ENCODE measurements at regions of chr3 and their contacts with region 1.

Region 1: GRCh38 chr3:72818092-72818773 is 30.0 kb downstream of the SHQ1 start:
- DNase-seq: no peak
- H3K4me3 ChIP-seq: no peak overlapping the region
- H3K27ac ChIP-seq: peak overlapping the region; percentile 55
- H3K27me3 ChIP-seq: no peaks in the 10 kb centered on the region
- CTCF ChIP-seq: peak; percentile 73

Region 2: DNA sequence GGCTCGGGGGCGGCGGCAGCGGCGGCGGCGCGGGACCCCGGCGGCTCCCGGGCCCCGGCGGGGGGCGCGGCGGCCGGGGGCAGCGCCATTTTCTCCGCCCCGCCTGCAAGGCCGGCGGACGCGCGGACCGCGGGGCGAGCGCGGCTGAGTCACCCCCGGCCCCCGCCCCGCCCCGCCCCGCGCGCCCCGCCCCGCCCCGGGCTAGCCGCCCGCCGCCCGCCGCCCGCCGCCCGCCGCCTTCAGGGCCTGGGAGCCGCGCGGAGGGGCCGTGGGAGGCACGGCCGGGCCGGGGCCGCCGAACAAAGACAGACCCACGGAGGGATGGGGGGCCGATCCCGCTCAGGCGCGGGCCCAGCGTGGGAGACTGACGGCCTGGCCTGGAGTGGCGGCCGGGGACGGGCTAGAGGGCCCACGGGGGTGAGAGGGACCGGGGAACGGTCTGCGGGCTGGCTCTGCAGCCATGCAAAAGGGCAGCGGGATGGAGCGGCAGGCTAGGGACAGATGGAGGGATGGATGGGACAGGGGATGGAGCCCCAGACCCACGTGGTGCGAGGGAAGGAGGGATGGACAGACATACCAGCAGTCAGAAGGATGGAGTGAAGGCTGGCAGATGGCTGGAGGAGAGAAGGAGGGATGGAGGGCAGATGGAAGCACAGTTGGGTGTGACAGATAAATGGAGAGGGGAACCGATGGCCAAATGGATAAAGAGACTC is 1092.8 kb before region 1 on chr3 and contains the start of gene EIF4E3:
- CTCF ChIA-PET with region 1: interaction called, 25 read pairs
- POLR2A ChIA-PET with region 1: no interaction called
- DNase-seq: no peak
- H3K4me3 ChIP-seq: peak within 1 kb of the TSS; percentile 72
- H3K27ac ChIP-seq: no peak within 1 kb of the TSS
- H3K27me3 ChIP-seq: peaks cover 38% of the 10 kb centered on the region
- CTCF ChIP-seq: no peak
- polyA plus RNA-seq, gene EIF4E3: 2.3 and 2.5 TPM in 2 replicates

Region 3: DNA sequence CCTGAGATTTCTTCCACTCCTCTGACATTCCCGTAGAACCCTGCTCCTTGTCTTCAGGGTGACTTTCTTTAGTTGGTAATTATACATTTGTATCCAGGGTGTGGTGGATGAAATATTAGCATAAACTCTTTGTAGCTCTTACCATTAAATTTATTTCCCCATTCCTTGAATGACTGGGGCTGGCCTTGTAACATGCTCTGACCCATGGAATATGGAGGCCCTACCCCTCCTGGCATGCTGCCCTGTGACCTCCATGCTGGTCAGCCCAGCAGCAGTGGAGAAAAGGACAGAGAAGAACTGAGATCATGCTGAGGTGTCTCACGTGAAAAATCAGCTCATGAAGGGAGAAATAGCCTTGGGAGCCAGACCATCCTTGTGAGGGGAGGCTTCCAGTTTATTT is 937.2 kb before region 1 on chr3:
- CTCF ChIA-PET with region 1: interaction called, 208 read pairs
- POLR2A ChIA-PET with region 1: no interaction called
- DNase-seq: no peak
- H3K4me3 ChIP-seq: no peak overlapping the region
- H3K27ac ChIP-seq: no peak overlapping the region
- H3K27me3 ChIP-seq: peaks cover 6% of the 10 kb centered on the region
- CTCF ChIP-seq: no peak

Region 4: DNA sequence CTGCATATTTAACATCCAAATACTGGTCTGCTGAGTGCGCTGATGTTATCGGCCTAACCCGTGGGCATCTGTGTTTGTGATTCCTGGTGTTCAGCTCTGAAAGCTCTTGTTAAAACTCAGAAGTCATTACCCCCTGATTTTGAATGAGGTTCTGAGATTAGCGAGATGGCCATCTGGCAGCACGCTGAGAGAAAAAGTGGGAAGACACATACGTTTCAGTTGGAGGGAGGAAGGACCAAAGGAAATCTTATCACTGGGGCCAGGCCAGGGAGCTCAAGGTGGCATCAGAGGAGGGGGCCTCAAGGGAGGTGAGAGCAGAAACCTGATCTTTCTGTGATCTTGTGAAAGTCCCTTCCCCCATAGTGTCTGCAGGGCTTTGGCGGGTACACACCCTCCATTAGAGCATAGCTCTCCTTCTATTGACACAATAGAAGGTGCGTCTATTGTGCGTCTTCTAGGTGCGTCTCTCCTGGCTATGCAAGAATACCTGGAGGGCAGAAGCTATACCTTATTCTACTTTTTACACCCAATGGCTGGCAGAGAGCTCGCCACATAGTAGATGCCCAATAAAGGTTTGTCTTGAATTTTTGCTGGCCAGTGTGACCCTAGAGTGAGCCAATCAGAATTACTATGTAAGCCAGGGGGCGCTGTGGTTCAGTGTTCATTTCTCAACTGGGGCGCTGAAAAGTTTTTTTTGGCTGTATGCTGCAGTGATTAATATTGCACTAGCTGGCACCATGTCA is 152.4 kb before region 1 on chr3:
- CTCF ChIA-PET with region 1: interaction called, 11 read pairs
- POLR2A ChIA-PET with region 1: no interaction called
- DNase-seq: no peak
- H3K4me3 ChIP-seq: no peak overlapping the region
- H3K27ac ChIP-seq: no peak overlapping the region
- H3K27me3 ChIP-seq: peaks cover 8% of the 10 kb centered on the region
- CTCF ChIP-seq: peak; percentile 45

Region 5: DNA sequence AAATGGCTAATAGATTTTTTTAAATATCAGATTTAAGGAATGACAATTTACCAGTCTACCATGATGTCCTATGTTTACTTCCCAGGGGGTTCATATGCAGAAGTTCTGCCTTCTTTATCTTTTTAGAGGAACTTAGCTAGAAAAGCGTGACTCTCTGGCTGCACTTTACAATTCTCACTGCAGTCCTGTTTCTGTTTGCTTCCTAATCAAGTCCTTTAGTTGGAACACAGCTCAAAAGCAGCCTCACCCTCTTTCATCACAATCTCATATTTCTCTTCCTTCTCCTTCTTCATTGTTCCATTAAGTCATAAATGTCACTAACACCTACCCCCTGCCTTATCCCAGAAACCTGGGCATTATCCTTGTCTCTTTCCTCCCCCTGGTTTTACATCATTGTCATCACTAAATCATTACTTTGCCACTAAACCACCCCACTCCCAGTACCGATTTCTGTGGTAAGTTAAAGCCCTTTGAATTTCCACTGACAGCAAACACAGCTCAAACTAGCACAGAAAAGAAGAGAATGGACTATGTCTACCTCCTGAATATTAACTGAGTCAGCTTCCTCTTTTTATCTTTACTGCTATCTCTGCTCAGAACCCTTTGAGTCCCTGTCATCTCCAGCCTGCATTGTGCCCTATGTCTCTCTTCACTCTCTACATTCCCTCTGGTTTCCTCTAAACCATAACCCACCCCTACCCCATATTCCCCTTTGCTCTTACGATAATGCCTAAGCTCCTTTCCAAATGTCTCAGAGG is 164.6 kb after region 1 on chr3:
- CTCF ChIA-PET with region 1: no interaction called
- POLR2A ChIA-PET with region 1: no interaction called
- DNase-seq: no peak
- H3K4me3 ChIP-seq: no peak overlapping the region
- H3K27ac ChIP-seq: no peak overlapping the region
- H3K27me3 ChIP-seq: no peaks in the 10 kb centered on the region
- CTCF ChIP-seq: no peak

Region 6: DNA sequence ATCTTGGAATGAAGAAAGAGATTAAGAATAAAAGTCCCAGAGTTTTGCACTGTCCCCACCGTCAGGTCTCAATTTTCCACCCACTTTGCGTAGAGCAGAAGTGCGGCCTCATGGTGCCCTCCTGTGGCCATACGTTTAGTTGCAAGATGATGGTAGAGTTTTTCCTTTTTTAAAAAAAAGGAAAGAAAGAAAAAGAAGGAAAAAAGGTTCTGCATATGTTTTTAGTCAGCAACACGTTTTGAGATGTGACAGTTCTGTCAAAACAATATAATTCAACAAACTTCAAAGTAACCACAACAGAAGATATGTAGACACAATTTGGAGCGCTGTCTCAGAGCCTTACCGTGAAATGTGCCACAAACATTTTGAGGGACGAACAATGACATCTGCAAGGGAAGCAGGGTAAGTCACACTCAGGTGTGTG is 267.9 kb after region 1 on chr3:
- CTCF ChIA-PET with region 1: interaction called, 28 read pairs
- POLR2A ChIA-PET with region 1: no interaction called
- DNase-seq: peak; percentile 15
- H3K4me3 ChIP-seq: peak overlapping the region; percentile 23; the same call in 1 of the 2 replicates
- H3K27ac ChIP-seq: no peak overlapping the region
- H3K27me3 ChIP-seq: peaks cover 2% of the 10 kb centered on the region
- CTCF ChIP-seq: peak; percentile 73

Region 7: DNA sequence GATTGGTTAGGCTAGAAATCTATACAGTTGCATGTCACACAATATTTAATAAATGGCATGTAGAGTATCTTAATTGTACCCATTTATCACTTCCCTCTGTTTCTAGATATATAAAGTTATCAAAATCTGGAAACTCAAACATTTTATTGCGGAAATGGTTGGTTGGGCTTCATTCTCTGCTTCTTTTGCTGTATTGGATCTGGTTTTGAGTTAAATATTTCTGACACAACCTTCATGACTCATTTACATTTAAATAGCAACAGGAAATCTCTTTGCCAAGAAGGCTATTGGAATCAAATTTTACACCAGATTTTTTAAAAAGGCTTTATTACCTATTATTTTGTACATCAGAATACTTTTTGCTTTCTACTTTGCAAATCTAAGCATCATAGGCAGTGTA is 397.0 kb after region 1 on chr3:
- CTCF ChIA-PET with region 1: no interaction called
- POLR2A ChIA-PET with region 1: no interaction called
- DNase-seq: no peak
- H3K4me3 ChIP-seq: no peak overlapping the region
- H3K27ac ChIP-seq: no peak overlapping the region
- H3K27me3 ChIP-seq: peaks cover 3% of the 10 kb centered on the region
- CTCF ChIP-seq: no peak